ENCODE measurements at regions of chr5 and their contacts with region 1.

Region 1: GRCh38 chr5:57173185-57174127 is at the start of gene GPBP1:
- DNase-seq: peak; percentile 98
- total RNA-seq, gene GPBP1: 49.0 TPM

Region 2: DNA sequence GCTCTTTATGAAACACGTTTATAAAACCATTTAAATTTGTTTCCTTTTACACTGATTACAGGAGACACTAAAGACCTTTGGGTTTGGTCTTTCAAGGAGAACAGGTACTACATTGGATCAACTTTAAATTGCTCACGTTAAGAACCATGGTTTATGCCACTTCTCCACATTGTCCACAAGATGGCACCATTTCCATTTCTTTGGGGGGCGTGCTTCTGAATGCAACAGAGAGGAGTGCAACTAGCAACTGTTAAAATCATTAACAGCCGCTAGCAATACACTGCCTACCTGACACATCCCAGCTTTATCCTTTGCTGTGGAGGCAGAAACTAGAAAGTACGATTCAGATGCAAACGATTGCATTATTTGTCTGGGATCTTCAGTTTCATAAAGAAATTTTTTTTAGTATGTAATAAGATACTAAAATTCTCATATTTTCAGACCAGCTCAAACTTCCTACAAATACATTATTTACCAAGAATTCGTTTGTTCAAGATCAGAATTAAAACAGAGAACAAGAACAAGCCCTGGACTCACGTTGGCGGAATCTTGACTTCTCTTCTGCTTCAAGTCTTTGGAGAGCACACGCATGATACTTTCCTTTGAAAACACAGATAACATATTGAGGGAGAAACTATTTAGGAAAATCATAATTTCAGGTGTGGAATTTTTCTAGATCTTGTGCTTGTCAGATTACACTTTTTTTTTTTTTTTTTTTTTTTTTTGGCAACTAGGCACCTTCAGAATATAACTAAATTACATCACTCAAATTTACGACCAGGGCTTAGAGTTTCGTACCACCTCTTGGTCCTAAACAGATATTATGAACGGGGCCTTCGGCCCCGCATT is 2001.2 kb before region 1 on chr5:
- intact Hi-C with region 1: loop called (anchors 10 kb)
- DNase-seq: no peak

Region 3: DNA sequence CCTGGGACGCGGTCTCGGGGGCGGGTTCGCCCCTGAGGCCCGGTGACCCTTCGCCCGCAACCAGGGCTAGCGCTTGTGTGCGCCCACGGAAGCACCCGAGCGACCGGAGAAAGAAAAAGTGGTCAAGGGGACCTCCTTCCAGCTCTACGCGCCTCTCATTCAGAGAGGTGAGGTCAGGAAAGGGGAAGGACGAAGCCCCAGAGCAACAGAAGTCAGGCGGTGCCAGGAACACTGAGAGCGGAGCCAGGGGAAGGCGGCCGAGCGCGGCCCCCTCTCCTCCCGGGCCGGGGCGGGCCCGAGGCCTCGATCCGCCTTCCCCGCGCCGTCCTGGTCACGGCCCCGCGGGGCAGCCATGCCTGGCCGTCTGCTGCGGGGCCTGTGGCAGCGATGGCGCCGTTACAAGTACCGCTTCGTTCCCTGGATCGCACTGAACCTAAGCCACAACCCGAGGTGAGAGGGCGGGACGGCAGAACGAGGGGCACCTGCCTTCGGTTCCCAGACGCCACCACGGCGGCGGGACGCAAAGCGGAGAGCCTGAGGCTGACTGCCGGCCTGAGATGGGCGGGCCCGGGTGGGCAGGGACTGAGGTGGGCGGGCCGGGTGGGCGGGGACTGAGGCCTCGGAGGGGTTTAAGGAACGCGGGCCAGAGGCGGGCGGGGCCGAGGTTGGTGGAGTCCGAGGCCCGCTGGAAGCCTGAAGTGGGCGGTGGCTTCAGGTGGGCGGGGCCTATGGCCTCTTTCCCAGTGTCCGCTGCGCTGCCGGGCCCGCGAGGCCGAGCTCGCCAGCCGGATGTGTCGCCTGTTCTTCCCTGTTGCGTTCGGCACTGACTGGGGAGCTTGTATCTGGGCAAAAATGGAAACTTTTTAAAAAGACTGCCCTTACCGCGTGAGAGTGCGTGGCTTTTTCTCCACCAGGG is 263.9 kb before region 1 on chr5 and contains the start of gene SETD9:
- intact Hi-C with region 1: loop called (anchors 1 kb)
- DNase-seq: peak; percentile 99
- total RNA-seq, gene SETD9: 14.2 TPM

Region 4: GRCh38 chr5:56951946-56952691 is 221.3 kb before region 1 on chr5 and contains the start of gene MIER3:
- intact Hi-C with region 1: loop called (anchors 2 kb)
- DNase-seq: peak; percentile 90
- total RNA-seq, gene MIER3: 14.8 TPM

Region 5: GRCh38 chr5:57094753-57095683 is 78.4 kb before region 1 on chr5:
- intact Hi-C with region 1: no loop called
- DNase-seq: no peak

Region 6: GRCh38 chr5:57209351-57210040 is 36.0 kb after region 1 on chr5:
- intact Hi-C with region 1: loop called (anchors 1 kb)
- DNase-seq: no peak